Dorsolateral prefrontal cortex (tissue), 120 donors: ENCODE measurements at regions of chr17 and their contacts with region 1.

Region 1: GRCh38 chr17:74659898-74660297 is 36.4 kb upstream of the CD300E start:
- DNase-seq: no peak
- H3K4me3 ChIP-seq: no peak overlapping the region
- H3K27ac ChIP-seq: no peak overlapping the region
- H3K27me3 ChIP-seq: peaks cover 0 to 44% (median 8%) of the 10 kb centered on the region in 45 donors
- CTCF ChIP-seq: no peak

Region 2: DNA sequence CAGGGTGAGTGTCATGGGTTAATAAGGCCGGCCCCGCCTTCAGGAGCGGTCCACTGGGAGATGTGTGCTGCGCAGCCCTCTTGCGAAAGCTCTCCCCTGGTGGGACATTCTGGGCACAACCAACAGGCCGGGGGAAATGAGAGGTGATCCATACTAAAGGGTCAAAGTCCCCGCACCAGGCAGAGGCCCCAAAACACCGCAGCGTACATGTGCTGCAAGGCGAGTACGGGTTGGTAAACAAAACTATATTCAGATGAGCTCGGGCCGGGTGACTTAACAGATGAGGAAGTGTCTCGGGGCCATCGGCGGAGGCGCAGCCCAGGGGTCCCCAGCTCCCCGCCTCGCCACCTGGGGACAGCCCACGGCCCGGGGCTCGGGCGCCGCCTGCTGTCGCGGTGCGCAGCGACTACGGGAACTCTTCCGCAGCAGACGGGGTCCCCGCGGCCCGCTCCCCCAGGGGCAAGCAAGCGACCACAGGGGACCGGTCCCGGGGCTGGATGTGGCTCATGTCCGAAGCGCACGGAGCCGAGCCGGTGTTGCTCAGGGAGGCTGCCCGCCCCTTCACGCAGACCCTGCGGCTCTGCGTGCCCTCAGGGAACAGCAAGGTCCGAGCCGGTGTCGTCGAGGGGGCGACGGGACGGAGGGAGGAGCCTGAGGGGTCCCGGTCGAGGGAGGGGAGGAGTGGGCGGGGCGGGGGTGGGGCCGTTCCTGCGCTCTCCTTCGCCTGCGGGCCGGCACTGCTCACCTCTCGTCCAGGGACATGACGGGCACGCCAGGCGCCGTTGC is 76.8 kb after region 1 on chr17 and contains the start of gene RAB37:
- intact Hi-C with region 1: loop called in 1 of 2 experiments (anchors 5 kb)
- DNase-seq: no peak
- H3K4me3 ChIP-seq: peak within 1 kb of the TSS in 40 of 59 donors; percentile 4 to 47 (median 22)
- H3K27ac ChIP-seq: peak within 1 kb of the TSS in 1 of 59 donors; percentile 57
- H3K27me3 ChIP-seq: peaks cover 0 to 63% (median 43%) of the 10 kb centered on the region in 45 donors
- CTCF ChIP-seq: peak in 43 of 56 donors; percentile 7 to 58 (median 38)
- total RNA-seq, gene RAB37: 7.1 to 41.8 (median 21.9) TPM

Region 3: GRCh38 chr17:74776044-74776977 is 116.4 kb after region 1 on chr17 and contains the start of gene NAT9:
- intact Hi-C with region 1: no loop called
- DNase-seq: peak; percentile 85 to 97 (median 90)
- H3K4me3 ChIP-seq: peak within 1 kb of the TSS; percentile 64 to 99 (median 92)
- H3K27ac ChIP-seq: peak within 1 kb of the TSS in 46 of 59 donors; percentile 29 to 90 (median 68)
- H3K27me3 ChIP-seq: no peaks in the 10 kb centered on the region
- CTCF ChIP-seq: peak in 25 of 56 donors; percentile 11 to 53 (median 22)
- total RNA-seq, gene NAT9: 29.5 to 78.2 (median 45.6) TPM

Region 4: DNA sequence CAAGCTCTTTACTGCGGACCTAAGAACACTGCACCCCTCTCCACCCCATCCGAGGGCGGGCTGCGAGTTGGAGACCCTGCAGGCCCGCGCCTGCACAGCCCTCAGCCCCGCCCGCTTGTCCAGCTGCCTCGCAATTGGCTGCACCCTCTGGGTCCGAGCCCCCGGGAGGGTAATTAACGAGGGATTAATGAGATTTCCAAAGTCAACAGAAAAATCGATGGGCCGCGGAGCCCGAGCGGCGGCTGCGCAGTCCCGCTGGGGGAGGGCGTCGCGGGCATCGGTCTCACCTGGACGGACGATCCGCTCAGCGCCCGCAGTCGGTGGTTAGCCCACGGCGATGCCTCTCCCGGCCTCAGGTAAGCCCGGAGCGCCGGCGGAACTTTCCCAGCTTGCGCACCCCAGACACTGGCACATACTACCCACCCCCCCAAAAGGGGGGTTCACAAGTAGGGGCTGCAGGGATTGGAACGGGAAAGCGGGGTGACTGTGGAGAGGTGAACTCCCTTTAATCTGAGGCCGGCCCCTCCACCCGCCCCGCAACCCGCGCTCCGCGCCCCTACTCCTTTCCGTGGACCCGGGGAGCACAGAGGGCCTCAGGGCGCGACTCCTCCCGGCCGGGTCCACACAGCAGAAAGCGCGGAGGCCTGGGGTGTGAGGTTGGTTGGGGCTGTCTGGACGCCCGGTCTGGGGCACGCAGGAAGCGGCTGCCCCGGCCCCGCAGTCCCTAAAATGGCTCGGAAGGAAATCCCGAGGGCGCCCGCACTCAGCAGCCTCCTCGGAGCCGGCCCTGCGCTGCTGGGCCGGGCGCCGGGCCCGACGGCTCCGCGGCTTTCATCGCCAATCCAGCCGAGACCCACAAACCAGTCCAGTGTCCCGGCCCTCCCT is 275.9 kb after region 1 on chr17 and contains the start of gene OTOP3:
- intact Hi-C with region 1: no loop called
- DNase-seq: no peak
- H3K4me3 ChIP-seq: peak within 1 kb of the TSS in 18 of 59 donors; percentile 3 to 31 (median 16)
- H3K27ac ChIP-seq: no peak within 1 kb of the TSS
- H3K27me3 ChIP-seq: peaks cover 0 to 51% (median 30%) of the 10 kb centered on the region in 45 donors
- CTCF ChIP-seq: no peak
- total RNA-seq, gene OTOP3: not detected